IMR-90 (cell line): ENCODE measurements at regions of chr13 and their contacts with region 1.

Region 1: GRCh38 chr13:24148399-24149305 is 11.9 kb upstream of the SPATA13 start:
- DNase-seq: peak; percentile 99
- ATAC-seq: peak; percentile 92
- H3K4me3 ChIP-seq: no peak overlapping the region
- H3K27ac ChIP-seq: peak overlapping the region; percentile 91
- H3K4me1 ChIP-seq: peaks cover 25% of the 10 kb centered on the region
- H3K27me3 ChIP-seq: no peaks in the 10 kb centered on the region
- CTCF ChIP-seq: peak; percentile 46
- POLR2A ChIP-seq: no peak
- RAD21 ChIP-seq: peak; percentile 36

Region 2: DNA sequence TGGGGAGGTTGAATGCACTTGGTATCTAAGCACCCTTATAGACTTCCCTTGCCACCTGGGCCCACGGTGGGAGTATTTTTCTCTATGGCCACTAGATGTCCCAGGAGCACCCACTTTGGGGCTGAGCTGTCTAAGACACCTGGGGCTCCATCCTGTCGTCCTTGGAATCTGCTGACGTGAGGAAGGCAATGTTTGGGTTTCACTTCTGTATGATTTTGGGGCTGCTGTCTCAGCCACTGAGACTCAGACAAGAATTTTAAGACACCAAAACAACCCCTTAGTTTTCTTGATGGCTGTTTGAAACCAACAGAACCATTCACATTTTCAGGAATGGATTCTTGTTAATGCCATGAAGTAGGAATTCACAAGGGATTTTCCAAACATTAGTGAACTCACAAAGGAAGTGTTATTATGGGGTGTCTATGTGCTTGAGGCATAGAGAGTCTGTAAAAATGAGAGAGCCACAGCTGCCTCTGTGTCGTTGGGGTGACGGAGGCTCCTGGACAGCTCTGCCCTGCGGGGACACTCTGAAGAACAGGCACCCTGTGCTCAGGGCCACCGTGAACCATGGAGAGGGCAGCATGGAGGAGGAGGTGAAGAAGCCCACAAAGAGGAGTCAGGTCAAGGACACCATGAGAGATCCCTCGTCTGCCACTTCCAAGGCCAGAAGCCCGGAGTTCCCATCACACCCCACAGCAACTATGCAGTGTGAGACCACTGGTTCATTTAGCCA is 95.0 kb before region 1 on chr13:
- CTCF ChIA-PET with region 1: interaction called, 3 read pairs
- POLR2A ChIA-PET with region 1: no interaction called
- dilution Hi-C with region 1: no loop called
- in situ Hi-C with region 1: no loop called
- intact Hi-C with region 1: loop called (anchors 5 kb)
- DNase-seq: peak; percentile 68
- ATAC-seq: peak; percentile 86
- H3K4me3 ChIP-seq: no peak overlapping the region
- H3K27ac ChIP-seq: no peak overlapping the region
- H3K4me1 ChIP-seq: peaks cover 14% of the 10 kb centered on the region
- H3K27me3 ChIP-seq: no peaks in the 10 kb centered on the region
- CTCF ChIP-seq: peak; percentile 70
- POLR2A ChIP-seq: no peak
- RAD21 ChIP-seq: peak; percentile 84

Region 3: GRCh38 chr13:24092108-24092507 is 56.5 kb before region 1 on chr13:
- CTCF ChIA-PET with region 1: no interaction called
- POLR2A ChIA-PET with region 1: no interaction called
- dilution Hi-C with region 1: no loop called
- in situ Hi-C with region 1: no loop called
- intact Hi-C with region 1: no loop called
- DNase-seq: no peak
- ATAC-seq: peak; percentile 44
- H3K4me3 ChIP-seq: no peak overlapping the region
- H3K27ac ChIP-seq: no peak overlapping the region
- H3K4me1 ChIP-seq: peaks cover 3% of the 10 kb centered on the region
- H3K27me3 ChIP-seq: no peaks in the 10 kb centered on the region; the same call in 1 of the 2 replicates
- CTCF ChIP-seq: no peak
- POLR2A ChIP-seq: no peak
- RAD21 ChIP-seq: no peak

Region 4: GRCh38 chr13:24254146-24254841 is 105.6 kb after region 1 on chr13:
- CTCF ChIA-PET with region 1: no interaction called
- POLR2A ChIA-PET with region 1: no interaction called
- dilution Hi-C with region 1: no loop called
- in situ Hi-C with region 1: no loop called
- intact Hi-C with region 1: no loop called
- DNase-seq: no peak
- ATAC-seq: peak; percentile 27
- H3K4me3 ChIP-seq: no peak overlapping the region
- H3K27ac ChIP-seq: no peak overlapping the region
- H3K4me1 ChIP-seq: no peaks in the 10 kb centered on the region
- H3K27me3 ChIP-seq: no peaks in the 10 kb centered on the region
- CTCF ChIP-seq: no peak
- POLR2A ChIP-seq: no peak
- RAD21 ChIP-seq: no peak

Region 5: GRCh38 chr13:24540236-24541126 is 391.8 kb after region 1 on chr13:
- CTCF ChIA-PET with region 1: no interaction called
- POLR2A ChIA-PET with region 1: no interaction called
- dilution Hi-C with region 1: no loop called
- in situ Hi-C with region 1: no loop called
- intact Hi-C with region 1: no loop called
- DNase-seq: no peak
- ATAC-seq: peak; percentile 35; the same call in 1 of the 2 replicates
- H3K4me3 ChIP-seq: no peak overlapping the region
- H3K27ac ChIP-seq: no peak overlapping the region
- H3K4me1 ChIP-seq: no peaks in the 10 kb centered on the region
- H3K27me3 ChIP-seq: peaks cover 28% of the 10 kb centered on the region
- CTCF ChIP-seq: peak; percentile 19; the same call in 1 of the 2 replicates
- POLR2A ChIP-seq: no peak
- RAD21 ChIP-seq: no peak